CD4-positive, alpha-beta memory T cell (primary cell): ENCODE measurements at regions of chr3 and their contacts with region 1.

Region 1: GRCh38 chr3:177144923-177145780 is 52.1 kb downstream of the TBL1XR1 start:
- DNase-seq: peak; percentile 48 to 72 (median 60)
- H3K4me3 ChIP-seq: no peak overlapping the region
- H3K4me3 Mint-ChIP-seq: peak overlapping the region; percentile 57 to 78 (median 72)
- H3K27ac ChIP-seq: peak overlapping the region; percentile 61
- H3K27ac Mint-ChIP-seq: peak overlapping the region; percentile 82 to 96 (median 92)
- H3K4me1 ChIP-seq: peaks cover 93% of the 10 kb centered on the region
- H3K4me1 Mint-ChIP-seq: peaks cover 63 to 84% (median 70%) of the 10 kb centered on the region in 4 donors
- H3K27me3 ChIP-seq: no peaks in the 10 kb centered on the region
- H3K27me3 Mint-ChIP-seq: no peaks in the 10 kb centered on the region

Region 2: DNA sequence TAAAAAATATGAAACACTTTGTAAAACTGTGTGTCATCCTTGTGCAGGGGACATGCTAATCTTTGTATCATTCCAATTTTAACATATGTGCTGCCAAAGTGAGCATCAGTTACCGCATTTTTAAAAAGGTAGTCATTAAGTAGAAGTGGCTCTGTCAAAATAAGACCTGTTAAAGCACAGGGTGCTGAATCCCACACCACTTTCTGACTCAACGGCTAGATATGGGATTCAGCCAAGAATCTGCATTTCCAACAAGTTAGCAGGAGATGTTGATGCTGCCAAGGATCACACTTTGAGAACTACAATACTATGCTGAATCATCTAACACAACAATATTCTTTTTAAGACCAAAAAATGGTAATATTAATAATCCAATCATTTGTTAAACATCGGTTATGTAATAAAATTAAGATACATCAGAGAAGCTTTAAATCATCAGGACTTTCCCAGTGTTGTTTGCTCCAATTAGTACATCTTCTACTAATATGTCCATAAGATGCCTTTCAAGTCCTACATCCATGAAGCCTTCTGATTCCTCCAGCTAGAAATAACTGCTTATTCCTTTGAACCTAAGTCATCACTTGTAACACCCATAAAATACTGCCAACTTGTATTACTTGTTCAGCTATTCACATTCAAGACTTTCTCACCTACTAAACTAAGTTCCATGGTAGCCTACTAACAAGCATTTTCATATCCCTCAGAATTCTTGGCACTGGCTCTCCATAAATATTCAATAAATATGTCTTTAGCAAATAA is 19.0 kb before region 1 on chr3:
- CTCF ChIA-PET with region 1: no interaction called
- POLR2A ChIA-PET with region 1: interaction called, 6 read pairs
- intact Hi-C with region 1: loop called (anchors 2 kb)
- DNase-seq: no peak
- H3K4me3 ChIP-seq: no peak overlapping the region
- H3K4me3 Mint-ChIP-seq: peak overlapping the region in 1 of 8 donors; percentile 10
- H3K27ac ChIP-seq: no peak overlapping the region
- H3K27ac Mint-ChIP-seq: peak overlapping the region in 1 of 7 donors; percentile 3
- H3K4me1 ChIP-seq: peaks cover 48% of the 10 kb centered on the region
- H3K4me1 Mint-ChIP-seq: peaks cover 55 to 89% (median 73%) of the 10 kb centered on the region in 4 donors
- H3K27me3 ChIP-seq: no peaks in the 10 kb centered on the region
- H3K27me3 Mint-ChIP-seq: no peaks in the 10 kb centered on the region